A673 (cell line): ENCODE measurements at regions of chr6 and their contacts with region 1.

Region 1: DNA sequence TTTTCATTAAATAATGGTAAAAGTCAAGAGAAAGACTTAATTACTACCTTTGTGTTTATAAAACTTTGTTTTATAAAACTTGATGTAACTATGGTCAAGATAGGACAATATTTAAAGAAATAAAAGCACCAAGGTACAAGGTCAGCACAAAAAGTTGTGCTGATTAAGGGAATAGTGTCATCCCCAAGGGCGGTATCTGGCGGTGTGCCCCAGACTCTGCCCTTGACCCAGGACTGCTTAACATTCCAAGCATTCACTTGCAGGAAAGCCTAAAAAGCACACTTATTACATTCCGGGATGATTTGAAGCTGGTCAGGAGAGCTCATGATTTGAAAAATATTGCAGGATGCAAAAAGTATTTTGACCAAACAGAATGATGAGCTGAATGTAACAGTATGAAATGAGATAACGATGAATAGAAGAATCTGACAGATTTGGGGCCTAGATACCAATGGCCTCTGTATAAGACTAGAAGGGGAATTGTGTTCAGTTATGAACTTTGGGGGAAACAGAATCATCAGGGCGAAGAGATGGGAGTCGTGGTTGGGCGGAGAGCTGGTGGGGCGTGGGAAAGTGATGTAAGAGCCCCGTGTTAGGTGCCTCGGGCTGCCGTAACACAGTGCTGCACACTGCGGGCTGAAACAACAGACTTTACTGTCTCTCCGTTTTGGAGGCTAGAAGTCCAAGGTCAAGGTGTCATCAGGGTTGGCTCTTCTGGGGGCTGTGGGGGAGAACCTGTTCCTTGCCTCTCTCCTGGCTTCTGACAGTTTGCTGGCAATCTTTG is 77.2 kb downstream of the CDC5L start:
- DNase-seq: no peak
- H3K4me3 ChIP-seq: no peak overlapping the region
- H3K27ac ChIP-seq: no peak overlapping the region
- H3K4me1 ChIP-seq: no peaks in the 10 kb centered on the region
- H3K27me3 ChIP-seq: no peaks in the 10 kb centered on the region
- CTCF ChIP-seq: no peak

Region 2: DNA sequence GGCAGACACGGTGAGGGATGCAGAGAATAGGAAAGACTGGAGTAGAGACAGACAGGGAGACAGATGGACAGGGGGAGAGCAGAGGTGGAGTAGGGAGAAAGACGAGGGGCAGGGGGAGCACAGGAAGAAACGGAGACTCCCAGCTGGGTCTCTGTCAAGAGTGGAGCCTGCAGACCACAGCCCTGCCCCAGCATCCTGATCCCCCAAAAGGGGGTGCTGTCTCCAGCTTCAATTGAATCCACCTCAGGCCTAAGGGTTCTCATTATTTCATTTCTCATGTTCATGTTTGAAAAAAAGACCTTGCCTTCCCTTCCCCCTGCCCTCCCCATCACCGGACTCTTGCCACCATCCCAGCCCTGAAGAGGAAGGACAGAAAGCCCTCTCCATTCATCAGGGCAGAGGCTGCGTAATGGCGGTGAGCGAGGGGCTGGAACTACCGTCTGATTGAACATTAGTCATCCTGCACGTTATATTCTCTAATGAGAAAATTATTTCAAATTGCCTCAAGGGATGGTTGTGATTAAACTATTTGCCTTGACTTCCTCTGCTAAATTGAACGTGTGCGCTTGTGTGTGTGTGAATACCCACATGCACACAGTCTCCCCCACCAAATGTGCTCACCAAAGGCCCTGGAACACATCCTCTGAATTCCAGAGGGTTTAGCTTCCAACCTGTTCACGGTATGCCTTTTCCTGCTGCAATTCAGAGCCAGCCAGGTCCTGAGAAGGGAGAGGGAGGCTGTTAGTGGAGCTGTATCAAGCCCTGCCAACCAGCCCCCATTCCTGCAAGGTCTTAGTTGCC is 21.1 kb after region 1 on chr6:
- CTCF ChIA-PET with region 1: interaction called, 10 read pairs
- POLR2A ChIA-PET with region 1: no interaction called
- intact Hi-C with region 1: no loop called
- DNase-seq: peak; percentile 81
- H3K4me3 ChIP-seq: no peak overlapping the region
- H3K27ac ChIP-seq: no peak overlapping the region
- H3K4me1 ChIP-seq: peaks cover 4% of the 10 kb centered on the region
- H3K27me3 ChIP-seq: no peaks in the 10 kb centered on the region
- CTCF ChIP-seq: no peak

Region 3: GRCh38 chr6:44898296-44898930 is 433.7 kb after region 1 on chr6:
- CTCF ChIA-PET with region 1: no interaction called
- POLR2A ChIA-PET with region 1: no interaction called
- intact Hi-C with region 1: no loop called
- DNase-seq: no peak
- H3K4me3 ChIP-seq: no peak overlapping the region
- H3K27ac ChIP-seq: no peak overlapping the region
- H3K4me1 ChIP-seq: peaks cover 10% of the 10 kb centered on the region
- H3K27me3 ChIP-seq: no peaks in the 10 kb centered on the region
- CTCF ChIP-seq: no peak